Activated CD4-positive, alpha-beta T cell treated with anti-CD3 and anti-CD28 coated beads for 36 hours (primary cell): ENCODE measurements at regions of chr1 and their contacts with region 1.

Region 1: GRCh38 chr1:203673550-203674427 is 47.2 kb downstream of the ATP2B4 start:
- DNase-seq: peak; percentile 81
- ATAC-seq: peak; percentile 95
- H3K4me3 Mint-ChIP-seq: peak overlapping the region; percentile 56
- H3K27ac Mint-ChIP-seq: peak overlapping the region; percentile 83
- H3K4me1 Mint-ChIP-seq: peaks cover 65% of the 10 kb centered on the region
- H3K27me3 Mint-ChIP-seq: no peaks in the 10 kb centered on the region

Region 2: GRCh38 chr1:203512830-203513611 is 160.8 kb before region 1 on chr1:
- CTCF ChIA-PET with region 1: no interaction called
- POLR2A ChIA-PET with region 1: no interaction called
- intact Hi-C with region 1: loop called in 1 of 2 experiments (anchors 1 kb)
- DNase-seq: peak; percentile 81
- ATAC-seq: peak; percentile 88
- H3K4me3 Mint-ChIP-seq: peak overlapping the region; percentile 6
- H3K27ac Mint-ChIP-seq: peak overlapping the region; percentile 83
- H3K4me1 Mint-ChIP-seq: peaks cover 36% of the 10 kb centered on the region
- H3K27me3 Mint-ChIP-seq: no peaks in the 10 kb centered on the region

Region 3: DNA sequence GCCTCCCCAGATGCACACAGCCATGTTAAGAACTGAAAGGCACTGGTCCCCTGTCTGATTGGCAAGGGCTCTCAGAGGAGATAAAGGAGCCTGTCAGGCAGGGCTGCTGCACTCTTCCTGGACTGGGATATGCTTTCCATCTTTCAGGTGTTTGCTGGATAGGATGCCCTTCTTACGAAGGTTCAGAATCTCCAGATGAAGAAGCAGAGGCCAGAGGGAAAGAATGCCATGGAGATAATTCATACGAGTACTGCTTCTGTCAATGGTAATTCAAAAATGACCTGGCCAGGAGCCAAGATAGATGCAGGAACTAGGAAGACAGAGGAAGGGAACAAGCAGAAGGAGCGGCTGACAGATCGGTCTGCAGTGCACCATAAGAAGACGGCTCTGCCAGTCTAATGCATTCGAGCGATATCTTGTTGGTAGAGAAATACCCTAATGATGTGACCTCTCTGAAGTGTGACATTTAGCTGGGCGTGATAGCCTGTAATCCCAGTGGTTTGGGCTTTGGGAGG is 63.8 kb before region 1 on chr1:
- CTCF ChIA-PET with region 1: interaction called, 3 read pairs
- POLR2A ChIA-PET with region 1: no interaction called
- intact Hi-C with region 1: loop called in 1 of 2 experiments (anchors 1 kb)
- DNase-seq: no peak
- ATAC-seq: no peak
- H3K4me3 Mint-ChIP-seq: no peak overlapping the region
- H3K27ac Mint-ChIP-seq: peak overlapping the region; percentile 7
- H3K4me1 Mint-ChIP-seq: peaks cover 46% of the 10 kb centered on the region
- H3K27me3 Mint-ChIP-seq: no peaks in the 10 kb centered on the region

Region 4: GRCh38 chr1:203649999-203650855 is 23.6 kb before region 1 on chr1:
- CTCF ChIA-PET with region 1: interaction called, 39 read pairs
- POLR2A ChIA-PET with region 1: interaction called, 12 read pairs
- intact Hi-C with region 1: loop called (anchors 1 kb)
- DNase-seq: peak; percentile 81
- ATAC-seq: peak; percentile 43
- H3K4me3 Mint-ChIP-seq: peak overlapping the region; percentile 59
- H3K27ac Mint-ChIP-seq: peak overlapping the region; percentile 89
- H3K4me1 Mint-ChIP-seq: peaks cover 74% of the 10 kb centered on the region
- H3K27me3 Mint-ChIP-seq: no peaks in the 10 kb centered on the region

Region 5: GRCh38 chr1:203656792-203657605 is 16.8 kb before region 1 on chr1:
- CTCF ChIA-PET with region 1: interaction called, 39 read pairs
- POLR2A ChIA-PET with region 1: interaction called, 12 read pairs
- intact Hi-C with region 1: loop called in 1 of 2 experiments (anchors 1 kb)
- DNase-seq: no peak
- ATAC-seq: peak; percentile 6
- H3K4me3 Mint-ChIP-seq: no peak overlapping the region
- H3K27ac Mint-ChIP-seq: peak overlapping the region; percentile 72
- H3K4me1 Mint-ChIP-seq: peaks cover 61% of the 10 kb centered on the region
- H3K27me3 Mint-ChIP-seq: no peaks in the 10 kb centered on the region

Region 6: GRCh38 chr1:203663294-203663693 is 10.5 kb before region 1 on chr1:
- CTCF ChIA-PET with region 1: interaction called, 12 read pairs
- POLR2A ChIA-PET with region 1: interaction called, 7 read pairs
- intact Hi-C with region 1: loop called in 1 of 2 experiments (anchors 1 kb)
- DNase-seq: peak; percentile 58
- ATAC-seq: peak; percentile 92
- H3K4me3 Mint-ChIP-seq: no peak overlapping the region
- H3K27ac Mint-ChIP-seq: peak overlapping the region; percentile 78
- H3K4me1 Mint-ChIP-seq: peaks cover 56% of the 10 kb centered on the region
- H3K27me3 Mint-ChIP-seq: no peaks in the 10 kb centered on the region

Region 7: GRCh38 chr1:203807196-203807595 is 133.4 kb after region 1 on chr1:
- CTCF ChIA-PET with region 1: no interaction called
- POLR2A ChIA-PET with region 1: interaction called, 10 read pairs
- intact Hi-C with region 1: no loop called
- DNase-seq: no peak
- ATAC-seq: peak; percentile 36
- H3K4me3 Mint-ChIP-seq: no peak overlapping the region
- H3K27ac Mint-ChIP-seq: no peak overlapping the region
- H3K4me1 Mint-ChIP-seq: peaks cover 38% of the 10 kb centered on the region
- H3K27me3 Mint-ChIP-seq: no peaks in the 10 kb centered on the region